B cell (primary cell): ENCODE measurements at regions of chr7 and their contacts with region 1.

Region 1: DNA sequence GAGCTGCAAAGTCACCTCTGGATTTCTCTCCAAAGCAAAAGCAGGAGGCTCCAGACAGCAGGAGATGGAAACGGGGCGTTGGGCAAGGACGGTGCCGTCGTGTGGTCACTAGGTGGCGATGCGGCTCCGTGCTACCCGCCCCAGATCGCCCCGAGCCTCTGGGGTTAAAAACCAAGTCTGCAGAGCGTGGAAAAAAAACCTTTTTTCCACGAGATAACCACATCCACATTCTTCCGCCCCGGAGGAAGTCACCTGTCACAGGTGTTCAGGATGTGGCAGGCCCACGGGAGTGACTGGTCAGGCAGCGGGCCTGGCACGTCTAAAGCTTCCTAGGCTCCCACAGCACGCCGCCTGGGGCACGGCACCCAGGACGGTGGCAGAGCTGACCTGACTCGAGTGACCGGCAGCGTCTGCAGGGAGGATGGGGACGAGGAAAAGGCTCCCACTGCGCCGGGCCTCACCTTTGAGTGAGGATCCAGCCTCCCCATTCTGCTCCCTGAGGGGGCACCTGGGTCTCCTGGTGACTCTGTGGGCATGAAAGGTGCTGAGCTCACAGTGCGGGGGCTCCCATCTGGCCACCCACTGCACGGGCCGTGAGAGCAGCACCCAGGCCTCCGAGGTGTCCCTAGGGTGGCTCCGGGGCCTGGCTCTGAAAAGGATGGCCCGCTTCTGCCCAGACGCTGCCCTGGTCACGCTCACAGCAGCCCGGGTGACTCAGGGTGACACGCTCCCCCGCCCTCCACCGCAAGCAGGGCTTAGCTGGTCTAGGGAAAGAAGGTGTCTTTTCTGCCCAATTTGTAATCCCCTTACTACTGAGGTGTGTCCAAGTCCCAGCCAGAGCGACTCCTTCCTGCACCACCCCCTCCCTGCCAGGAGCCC is 71.3 kb upstream of the TNRC18 start:
- DNase-seq: peak; percentile 86
- ATAC-seq: peak; percentile 89
- H3K4me3 ChIP-seq: peak overlapping the region in 4 of 5 experiments; percentile 38 to 59 (median 42)
- H3K4me3 Mint-ChIP-seq: peak overlapping the region; percentile 77
- H3K27ac ChIP-seq: peak overlapping the region; percentile 38 to 66
- H3K27ac Mint-ChIP-seq: peak overlapping the region; percentile 61
- H3K4me1 ChIP-seq: peaks cover 15 to 29% of the 10 kb centered on the region in 2 donors
- H3K4me1 Mint-ChIP-seq: peaks cover 23% of the 10 kb centered on the region
- H3K27me3 ChIP-seq: no peaks in the 10 kb centered on the region
- H3K27me3 Mint-ChIP-seq: no peaks in the 10 kb centered on the region
- CTCF ChIP-seq: peak; percentile 98

Region 2: GRCh38 chr7:5514440-5515035 is 19.6 kb after region 1 on chr7:
- CTCF ChIA-PET with region 1: interaction called, 18 read pairs
- POLR2A ChIA-PET with region 1: interaction called, 10 read pairs
- intact Hi-C with region 1: no loop called
- DNase-seq: no peak
- ATAC-seq: no peak
- H3K4me3 ChIP-seq: peak overlapping the region in 3 of 5 experiments; percentile 78 to 85 (median 82)
- H3K4me3 Mint-ChIP-seq: peak overlapping the region; percentile 100
- H3K27ac ChIP-seq: no peak overlapping the region
- H3K27ac Mint-ChIP-seq: no peak overlapping the region
- H3K4me1 ChIP-seq: peaks cover 15 to 25% of the 10 kb centered on the region in 2 donors
- H3K4me1 Mint-ChIP-seq: peaks cover 12% of the 10 kb centered on the region
- H3K27me3 ChIP-seq: no peaks in the 10 kb centered on the region
- H3K27me3 Mint-ChIP-seq: no peaks in the 10 kb centered on the region
- CTCF ChIP-seq: no peak

Region 3: DNA sequence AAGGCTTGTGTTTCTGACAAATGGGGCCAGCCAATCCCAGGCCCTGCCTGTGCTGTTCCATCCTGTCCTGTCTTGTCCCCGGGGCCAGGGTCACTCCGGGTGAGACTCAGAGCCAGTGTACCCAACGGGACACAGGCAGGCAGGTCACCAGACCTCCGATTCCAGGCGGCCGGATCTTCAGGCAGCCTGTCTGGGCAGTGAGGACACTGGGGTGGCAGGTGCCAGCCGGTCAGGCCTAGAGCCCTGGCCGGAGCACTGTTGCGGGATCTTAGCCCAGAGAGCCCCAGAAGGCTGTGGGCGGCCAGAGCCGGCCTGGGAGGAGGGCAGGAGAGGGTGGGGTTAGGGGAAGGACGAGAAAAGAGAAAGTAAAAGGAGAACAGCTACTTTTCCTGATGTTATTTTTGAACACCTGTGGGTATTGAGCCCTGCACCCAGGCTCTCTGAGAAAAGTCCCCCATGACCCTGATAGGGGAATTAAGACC is 63.0 kb after region 1 on chr7:
- CTCF ChIA-PET with region 1: interaction called, 100 read pairs
- POLR2A ChIA-PET with region 1: interaction called, 8 read pairs
- intact Hi-C with region 1: loop called (anchors 1 kb)
- DNase-seq: peak; percentile 77
- ATAC-seq: peak; percentile 18
- H3K4me3 ChIP-seq: peak overlapping the region; percentile 41 to 67 (median 58)
- H3K4me3 Mint-ChIP-seq: peak overlapping the region; percentile 92
- H3K27ac ChIP-seq: peak overlapping the region; percentile 92 to 93
- H3K27ac Mint-ChIP-seq: peak overlapping the region; percentile 96
- H3K4me1 ChIP-seq: peaks cover 47 to 64% of the 10 kb centered on the region in 2 donors
- H3K4me1 Mint-ChIP-seq: peaks cover 52% of the 10 kb centered on the region
- H3K27me3 ChIP-seq: no peaks in the 10 kb centered on the region
- H3K27me3 Mint-ChIP-seq: no peaks in the 10 kb centered on the region
- CTCF ChIP-seq: no peak

Region 4: GRCh38 chr7:5677538-5678294 is 182.8 kb after region 1 on chr7:
- CTCF ChIA-PET with region 1: interaction called, 105 read pairs
- POLR2A ChIA-PET with region 1: interaction called, 4 read pairs
- intact Hi-C with region 1: loop called (anchors 1 kb)
- DNase-seq: peak; percentile 74
- ATAC-seq: peak; percentile 22
- H3K4me3 ChIP-seq: no peak overlapping the region
- H3K4me3 Mint-ChIP-seq: no peak overlapping the region
- H3K27ac ChIP-seq: peak overlapping the region in 1 of 2 donors; percentile 32
- H3K27ac Mint-ChIP-seq: peak overlapping the region; percentile 57
- H3K4me1 ChIP-seq: peaks cover 51 to 54% of the 10 kb centered on the region in 2 donors
- H3K4me1 Mint-ChIP-seq: peaks cover 53% of the 10 kb centered on the region
- H3K27me3 ChIP-seq: no peaks in the 10 kb centered on the region
- H3K27me3 Mint-ChIP-seq: no peaks in the 10 kb centered on the region
- CTCF ChIP-seq: peak; percentile 77

Region 5: GRCh38 chr7:5704534-5704922 is 209.6 kb after region 1 on chr7:
- CTCF ChIA-PET with region 1: interaction called, 170 read pairs
- POLR2A ChIA-PET with region 1: interaction called, 3 read pairs
- intact Hi-C with region 1: loop called (anchors 1 kb)
- DNase-seq: peak; percentile 87
- ATAC-seq: peak; percentile 54
- H3K4me3 ChIP-seq: no peak overlapping the region
- H3K4me3 Mint-ChIP-seq: no peak overlapping the region
- H3K27ac ChIP-seq: no peak overlapping the region
- H3K27ac Mint-ChIP-seq: no peak overlapping the region
- H3K4me1 ChIP-seq: peaks cover 15 to 30% of the 10 kb centered on the region in 2 donors
- H3K4me1 Mint-ChIP-seq: peaks cover 35% of the 10 kb centered on the region
- H3K27me3 ChIP-seq: no peaks in the 10 kb centered on the region
- H3K27me3 Mint-ChIP-seq: no peaks in the 10 kb centered on the region
- CTCF ChIP-seq: peak; percentile 93